K562 (cell line): ENCODE measurements at regions of chr5 and their contacts with region 1.

Region 1: DNA sequence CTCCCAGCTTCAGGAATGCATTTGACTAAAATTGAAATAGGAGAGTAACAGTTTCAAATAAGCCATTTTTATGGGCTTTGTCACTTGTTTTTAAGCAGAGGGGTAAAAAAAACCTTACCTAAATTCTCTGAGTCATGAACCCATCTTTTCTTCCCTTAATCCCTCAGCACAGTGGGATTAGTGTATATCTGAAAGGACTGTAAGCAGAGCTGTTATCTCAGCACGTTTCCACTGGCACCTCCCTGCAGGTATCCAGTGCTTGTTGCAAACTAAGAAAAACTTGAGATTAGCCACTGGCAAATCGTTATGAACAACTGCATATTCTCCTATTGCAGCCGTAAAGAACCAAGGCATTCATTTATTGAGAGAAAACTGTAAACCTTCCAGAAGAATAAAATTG is 872.7 kb downstream of the EFNA5 start:
- DNase-seq: no peak
- ATAC-seq: no peak
- H3K4me3 ChIP-seq: no peak overlapping the region
- H3K27ac ChIP-seq: no peak overlapping the region
- H3K4me1 ChIP-seq: no peaks in the 10 kb centered on the region
- H3K27me3 ChIP-seq: no peaks in the 10 kb centered on the region
- CTCF ChIP-seq: no peak
- EP300 ChIP-seq: no peak
- POLR2A ChIP-seq: no peak
- RAD21 ChIP-seq: no peak

Region 2: GRCh38 chr5:106727071-106727470 is 70.9 kb before region 1 on chr5:
- CTCF ChIA-PET with region 1: no interaction called
- POLR2A ChIA-PET with region 1: no interaction called
- in situ Hi-C with region 1: no loop called
- intact Hi-C with region 1: loop called (anchors 5 kb)
- DNase-seq: no peak
- ATAC-seq: no peak
- H3K4me3 ChIP-seq: no peak overlapping the region
- H3K27ac ChIP-seq: no peak overlapping the region
- H3K4me1 ChIP-seq: no peaks in the 10 kb centered on the region
- H3K27me3 ChIP-seq: no peaks in the 10 kb centered on the region
- CTCF ChIP-seq: no peak
- EP300 ChIP-seq: no peak
- POLR2A ChIP-seq: no peak
- RAD21 ChIP-seq: no peak

Region 3: GRCh38 chr5:106974272-106974671 is 176.3 kb after region 1 on chr5:
- CTCF ChIA-PET with region 1: no interaction called
- POLR2A ChIA-PET with region 1: no interaction called
- in situ Hi-C with region 1: no loop called
- intact Hi-C with region 1: no loop called
- DNase-seq: no peak
- ATAC-seq: no peak
- H3K4me3 ChIP-seq: no peak overlapping the region
- H3K27ac ChIP-seq: no peak overlapping the region
- H3K4me1 ChIP-seq: no peaks in the 10 kb centered on the region
- H3K27me3 ChIP-seq: no peaks in the 10 kb centered on the region
- CTCF ChIP-seq: no peak
- EP300 ChIP-seq: no peak
- POLR2A ChIP-seq: no peak
- RAD21 ChIP-seq: no peak

Region 4: DNA sequence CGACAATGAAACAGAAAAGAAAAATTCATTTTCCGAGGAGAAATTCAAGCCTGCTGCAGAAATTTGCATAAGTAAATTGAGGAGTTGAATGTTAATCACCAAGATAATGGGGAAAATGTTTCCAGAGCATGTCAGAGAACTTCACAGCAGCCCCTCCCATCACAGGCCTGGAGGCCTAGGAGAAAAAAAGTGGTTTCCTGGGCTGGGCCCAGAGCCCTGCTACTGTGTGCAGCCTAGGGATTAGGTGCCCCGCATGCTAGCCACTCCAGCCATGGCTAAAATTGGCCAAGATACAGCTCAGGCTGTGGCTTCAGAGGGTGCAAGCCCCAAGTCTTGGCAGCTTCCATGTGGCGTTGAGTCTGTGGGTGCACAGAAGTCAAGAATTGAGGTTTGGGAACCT is 955.4 kb after region 1 on chr5:
- CTCF ChIA-PET with region 1: no interaction called
- POLR2A ChIA-PET with region 1: no interaction called
- in situ Hi-C with region 1: no loop called
- intact Hi-C with region 1: no loop called
- DNase-seq: no peak
- ATAC-seq: no peak
- H3K4me3 ChIP-seq: no peak overlapping the region
- H3K27ac ChIP-seq: no peak overlapping the region
- H3K4me1 ChIP-seq: no peaks in the 10 kb centered on the region
- H3K27me3 ChIP-seq: no peaks in the 10 kb centered on the region
- CTCF ChIP-seq: no peak
- EP300 ChIP-seq: no peak
- POLR2A ChIP-seq: no peak
- RAD21 ChIP-seq: no peak